ENCODE measurements at regions of chr5 and their contacts with region 1.

Region 1: DNA sequence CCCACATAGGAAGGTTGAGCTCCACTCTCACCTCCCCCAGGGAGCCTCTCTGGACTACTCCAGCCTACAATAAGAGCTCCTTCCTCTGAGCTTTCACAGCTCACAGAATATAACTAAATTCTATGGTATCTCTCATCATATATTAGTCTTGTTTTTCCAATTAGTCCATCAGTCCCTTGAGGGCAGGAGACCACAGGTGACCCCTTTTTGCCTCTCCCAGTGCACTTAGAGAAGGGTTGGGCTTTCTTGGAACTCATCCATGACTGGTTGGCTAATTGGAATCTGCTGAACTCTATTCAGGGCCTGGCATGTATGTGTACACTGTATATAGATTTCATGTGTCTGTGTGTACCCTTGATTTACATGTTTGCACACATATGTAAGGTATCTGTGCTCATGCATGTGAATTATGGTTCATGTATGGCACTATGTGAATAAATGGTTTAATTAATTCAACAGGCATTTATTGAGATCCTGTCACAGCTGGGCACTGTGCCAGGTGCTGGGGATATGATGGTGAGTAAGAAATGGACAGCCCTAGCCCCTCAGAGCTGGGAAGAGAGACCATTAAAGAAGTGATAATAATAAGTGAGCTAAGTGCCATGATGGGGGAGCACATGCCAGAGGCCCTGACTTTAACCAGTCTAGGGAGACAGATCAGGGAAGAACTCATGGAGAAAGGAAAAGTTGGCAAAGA is 50.5 kb upstream of the ARAP3 start:
- DNase-seq: no peak
- ATAC-seq: no peak
- H3K4me3 Mint-ChIP-seq: no peak overlapping the region
- H3K27ac Mint-ChIP-seq: no peak overlapping the region
- H3K4me1 Mint-ChIP-seq: no peaks in the 10 kb centered on the region
- H3K27me3 Mint-ChIP-seq: peaks cover 8% of the 10 kb centered on the region
- CTCF ChIP-seq: no peak

Region 2: GRCh38 chr5:141701360-141702119 is 31.0 kb before region 1 on chr5:
- CTCF ChIA-PET with region 1: interaction called, 11 read pairs
- POLR2A ChIA-PET with region 1: interaction called, 3 read pairs
- intact Hi-C with region 1: no loop called
- DNase-seq: peak; percentile 47
- ATAC-seq: peak; percentile 46
- H3K4me3 Mint-ChIP-seq: peak overlapping the region; percentile 56
- H3K27ac Mint-ChIP-seq: no peak overlapping the region
- H3K4me1 Mint-ChIP-seq: peaks cover 11% of the 10 kb centered on the region
- H3K27me3 Mint-ChIP-seq: peaks cover 32% of the 10 kb centered on the region
- CTCF ChIP-seq: no peak

Region 3: DNA sequence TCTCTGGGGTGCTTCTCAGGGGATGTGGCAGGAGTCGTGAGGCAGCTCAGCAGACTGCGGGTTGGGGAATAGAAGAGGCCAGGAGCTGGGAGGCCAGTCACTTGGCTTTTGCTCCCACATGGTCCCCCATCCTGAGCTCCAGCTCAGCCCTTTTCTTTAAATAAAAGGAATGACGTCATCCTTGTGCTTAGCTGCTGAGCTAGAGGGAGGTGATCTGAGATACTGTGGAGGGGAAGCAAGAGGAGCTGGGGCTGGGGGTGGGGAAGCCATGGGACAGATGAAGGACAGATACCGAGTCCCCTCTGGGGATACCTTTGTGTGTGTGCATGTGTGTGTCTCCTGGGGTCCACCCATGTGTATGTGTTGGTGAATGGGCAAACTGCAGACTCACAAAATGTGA is 38.5 kb after region 1 on chr5:
- CTCF ChIA-PET with region 1: no interaction called
- POLR2A ChIA-PET with region 1: no interaction called
- intact Hi-C with region 1: no loop called
- DNase-seq: no peak
- ATAC-seq: no peak
- H3K4me3 Mint-ChIP-seq: no peak overlapping the region
- H3K27ac Mint-ChIP-seq: no peak overlapping the region
- H3K4me1 Mint-ChIP-seq: no peaks in the 10 kb centered on the region
- H3K27me3 Mint-ChIP-seq: peaks cover 6% of the 10 kb centered on the region
- CTCF ChIP-seq: no peak

Region 4: DNA sequence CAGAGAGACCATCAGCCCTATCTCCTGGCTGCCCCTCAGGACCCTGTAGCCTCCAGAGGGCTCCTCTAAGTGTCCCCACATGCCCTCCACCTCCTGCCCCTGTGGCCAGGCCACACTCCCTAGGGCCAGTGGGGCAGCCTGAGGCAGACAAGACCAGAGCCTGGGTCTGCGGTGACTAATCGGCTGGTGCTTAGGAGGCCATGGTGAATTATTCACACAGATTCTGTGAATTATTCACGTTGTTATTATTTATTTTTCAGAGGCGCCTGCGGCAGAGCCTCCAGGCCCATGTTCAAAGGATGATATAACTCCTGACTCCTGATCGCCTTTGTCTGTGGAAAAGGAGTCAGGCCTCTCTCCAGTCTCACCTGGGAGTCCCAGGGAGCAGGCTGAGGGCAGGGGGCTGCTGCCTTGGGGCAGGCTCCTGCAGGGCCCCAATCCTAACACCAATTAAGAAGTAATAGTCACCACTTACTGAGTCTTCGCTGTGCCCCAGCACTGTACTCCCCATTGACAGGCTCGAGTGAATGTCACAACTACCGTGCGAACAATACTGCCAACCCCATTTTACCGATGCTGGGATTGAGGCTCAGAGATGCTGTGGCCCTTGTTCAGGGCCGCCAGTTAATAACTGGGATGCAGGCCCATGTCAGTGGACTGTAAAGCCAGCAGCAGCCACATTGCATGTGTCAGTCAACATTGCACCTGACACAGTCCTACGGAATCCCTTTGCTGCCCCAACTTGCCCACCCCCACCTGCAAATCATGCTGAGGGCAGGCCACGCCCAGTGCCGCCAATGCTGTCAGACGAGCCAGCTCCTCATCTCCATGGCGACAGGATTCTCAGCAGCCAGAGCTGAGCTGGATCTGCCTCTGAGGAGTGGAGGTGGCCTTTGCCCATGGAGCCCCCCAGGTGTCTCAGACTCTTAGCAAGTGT is 50.7 kb after region 1 on chr5:
- CTCF ChIA-PET with region 1: no interaction called
- POLR2A ChIA-PET with region 1: no interaction called
- intact Hi-C with region 1: no loop called
- DNase-seq: no peak
- ATAC-seq: no peak
- H3K4me3 Mint-ChIP-seq: no peak overlapping the region
- H3K27ac Mint-ChIP-seq: no peak overlapping the region
- H3K4me1 Mint-ChIP-seq: peaks cover 10% of the 10 kb centered on the region
- H3K27me3 Mint-ChIP-seq: peaks cover 9% of the 10 kb centered on the region
- CTCF ChIP-seq: no peak